ENCODE measurements at regions of chr12 and their contacts with region 1.

Region 1: GRCh38 chr12:70719672-70720420 is 82.6 kb upstream of the PTPRB start:
- DNase-seq: peak; percentile 64
- H3K4me3 ChIP-seq: peak overlapping the region; percentile 69
- H3K27ac ChIP-seq: no peak overlapping the region
- H3K4me1 ChIP-seq: no peaks in the 10 kb centered on the region
- H3K27me3 ChIP-seq: no peaks in the 10 kb centered on the region

Region 2: GRCh38 chr12:69880571-69880970 is 839.3 kb before region 1 on chr12:
- in situ Hi-C with region 1: loop called (anchors 10 kb)
- DNase-seq: peak; percentile 28
- H3K4me3 ChIP-seq: no peak overlapping the region
- H3K27ac ChIP-seq: no peak overlapping the region
- H3K4me1 ChIP-seq: no peaks in the 10 kb centered on the region
- H3K27me3 ChIP-seq: no peaks in the 10 kb centered on the region

Region 3: GRCh38 chr12:70365648-70366518 is 354.0 kb before region 1 on chr12 and contains the start of gene KCNMB4:
- in situ Hi-C with region 1: loop called (anchors 25 kb)
- DNase-seq: peak; percentile 68
- H3K4me3 ChIP-seq: peak within 1 kb of the TSS; percentile 93
- H3K27ac ChIP-seq: no peak within 1 kb of the TSS
- H3K4me1 ChIP-seq: 0 out of 2 replicates have a peak, but pooled peaks cover 9% of the 10 kb centered on the region
- H3K27me3 ChIP-seq: peaks cover 8% of the 10 kb centered on the region; the same call in 1 of the 2 replicates
- total RNA-seq, gene KCNMB4: 1.8 and 2.7 TPM in 2 replicates

Region 4: DNA sequence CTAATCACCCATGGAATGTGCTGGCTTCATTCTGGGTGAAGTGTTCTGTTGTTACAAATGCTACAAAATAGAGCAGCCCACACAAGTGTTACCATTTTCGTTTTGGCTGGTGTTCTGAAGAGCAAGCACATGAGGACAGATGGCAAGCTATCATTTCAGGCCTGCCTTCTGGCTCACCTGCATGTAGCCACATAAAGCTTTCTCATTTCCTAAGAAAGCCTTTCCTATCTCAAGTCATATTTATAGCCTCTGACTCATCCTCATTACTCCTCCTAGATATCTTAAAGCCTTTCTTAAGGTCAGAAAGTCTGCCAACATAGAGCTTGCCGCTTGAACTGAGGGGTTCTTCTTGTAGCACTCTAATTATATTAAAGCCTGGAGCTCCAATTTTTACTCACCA is 111.7 kb after region 1 on chr12:
- in situ Hi-C with region 1: no loop called
- DNase-seq: peak; percentile 45
- H3K4me3 ChIP-seq: no peak overlapping the region
- H3K27ac ChIP-seq: no peak overlapping the region
- H3K4me1 ChIP-seq: peaks cover 11% of the 10 kb centered on the region
- H3K27me3 ChIP-seq: no peaks in the 10 kb centered on the region

Region 5: DNA sequence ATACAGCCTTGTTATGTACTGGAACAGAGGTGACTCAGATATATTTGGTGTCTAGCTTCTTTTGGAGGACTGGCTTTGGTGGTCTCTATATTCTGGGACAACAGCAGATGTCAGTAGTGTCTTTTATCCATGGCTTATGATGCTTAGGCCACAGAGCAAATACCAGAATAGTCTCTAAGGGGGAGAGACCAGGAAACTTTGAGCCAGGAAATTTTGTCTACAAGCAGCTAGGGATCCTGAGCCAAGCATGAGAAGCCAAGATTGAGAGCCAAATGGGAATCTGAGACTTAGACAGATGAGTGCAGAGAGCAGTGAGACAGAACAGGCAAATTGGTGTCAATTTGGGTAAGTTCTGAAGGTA is 229.1 kb after region 1 on chr12:
- in situ Hi-C with region 1: no loop called
- DNase-seq: no peak
- H3K4me3 ChIP-seq: no peak overlapping the region
- H3K27ac ChIP-seq: no peak overlapping the region
- H3K4me1 ChIP-seq: no peaks in the 10 kb centered on the region
- H3K27me3 ChIP-seq: no peaks in the 10 kb centered on the region